ENCODE measurements at regions of chr4 and their contacts with region 1.

Region 1: DNA sequence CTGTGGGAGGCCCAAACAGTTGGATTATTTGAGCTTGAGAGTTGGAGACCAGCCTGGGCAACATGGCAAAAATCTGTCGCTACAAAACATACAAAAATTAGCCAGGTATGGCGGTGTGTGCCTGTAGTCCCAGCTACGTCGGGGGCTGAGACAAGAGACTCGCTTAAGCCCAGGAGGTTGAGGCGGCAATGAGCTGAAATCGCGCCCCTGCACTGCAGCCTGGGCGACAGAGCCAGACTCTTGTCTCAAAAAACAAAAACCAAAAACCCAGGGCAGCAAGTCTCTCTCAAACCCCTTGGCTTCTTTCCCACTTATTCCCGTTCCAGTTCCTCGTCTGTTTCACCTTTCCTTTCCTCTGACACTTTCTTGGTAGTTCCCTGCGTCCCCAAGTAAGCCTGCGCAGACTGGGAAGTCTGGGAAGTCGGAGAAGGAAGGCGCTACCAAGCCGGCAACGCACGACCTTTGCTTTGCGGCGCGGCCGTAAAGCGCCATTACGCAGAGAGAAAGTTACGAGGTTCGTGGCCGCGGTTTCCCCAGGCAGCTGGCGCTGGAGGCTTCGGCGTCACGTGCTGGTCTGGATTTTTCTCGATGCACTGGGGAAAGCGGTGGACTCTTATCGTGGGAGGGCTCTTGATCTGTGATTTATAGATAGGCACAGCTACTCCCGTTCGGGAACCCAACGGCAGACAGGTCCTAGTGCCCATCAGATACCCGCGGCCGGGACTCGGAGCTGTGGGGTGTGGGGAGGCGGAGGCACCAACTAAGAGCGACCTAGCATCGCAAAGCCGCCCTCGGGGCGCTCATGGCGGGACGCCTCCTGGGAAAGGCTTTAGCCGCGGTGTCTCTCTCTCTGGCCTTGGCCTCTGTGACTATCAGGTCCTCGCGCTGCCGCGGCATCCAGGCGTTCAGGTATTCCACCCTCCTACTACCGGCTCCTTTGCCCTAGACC is at the start of gene NUDT9:
- DNase-seq: peak; percentile 97
- H3K4me3 ChIP-seq: peak within 1 kb of the TSS; percentile 66 to 77 (median 67)
- H3K27ac ChIP-seq: peak within 1 kb of the TSS; percentile 80
- H3K4me1 ChIP-seq: peaks cover 13% of the 10 kb centered on the region
- H3K27me3 ChIP-seq: no peaks in the 10 kb centered on the region
- CTCF ChIP-seq: no peak
- total RNA-seq, gene NUDT9: 11.0 to 20.4 TPM

Region 2: GRCh38 chr4:86398187-86398586 is 1024.2 kb before region 1 on chr4:
- CTCF ChIA-PET with region 1: no interaction called
- dilution Hi-C with region 1: no loop called
- in situ Hi-C with region 1: no loop called
- intact Hi-C with region 1: no loop called
- DNase-seq: no peak
- H3K4me3 ChIP-seq: no peak overlapping the region
- H3K27ac ChIP-seq: no peak overlapping the region
- H3K4me1 ChIP-seq: no peaks in the 10 kb centered on the region
- H3K27me3 ChIP-seq: no peaks in the 10 kb centered on the region
- CTCF ChIP-seq: no peak

Region 3: DNA sequence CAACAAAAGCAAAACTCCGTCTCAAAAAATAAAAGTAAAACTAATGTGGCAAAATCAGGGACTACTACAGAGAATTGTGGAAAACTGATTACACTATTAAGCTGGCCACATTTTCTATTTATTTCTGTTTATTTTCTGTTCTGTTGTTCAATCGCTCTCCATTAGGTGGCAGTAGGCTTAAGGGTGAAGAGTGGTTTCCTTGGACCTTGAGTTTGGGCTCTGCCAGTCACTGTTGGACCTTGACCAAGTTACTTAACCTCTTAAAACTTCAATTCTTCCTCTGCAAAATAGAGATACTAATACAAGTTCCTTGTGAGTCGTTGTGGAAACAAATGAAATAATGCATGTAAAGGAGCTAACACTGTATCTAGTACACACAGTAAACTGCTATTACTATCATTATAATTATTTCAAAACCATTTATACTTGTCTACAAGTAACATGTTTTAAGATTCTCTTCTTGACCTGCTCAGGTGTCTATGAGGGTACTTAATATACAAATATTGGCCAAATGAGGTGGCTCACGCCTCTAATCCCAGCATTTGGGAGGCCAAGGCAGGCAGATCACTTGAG is 46.6 kb before region 1 on chr4:
- CTCF ChIA-PET with region 1: no interaction called
- dilution Hi-C with region 1: no loop called
- in situ Hi-C with region 1: no loop called
- intact Hi-C with region 1: loop called (anchors 1 kb)
- DNase-seq: peak; percentile 42
- H3K4me3 ChIP-seq: no peak overlapping the region
- H3K27ac ChIP-seq: no peak overlapping the region
- H3K4me1 ChIP-seq: no peaks in the 10 kb centered on the region
- H3K27me3 ChIP-seq: no peaks in the 10 kb centered on the region
- CTCF ChIP-seq: peak; percentile 75 to 80

Region 4: DNA sequence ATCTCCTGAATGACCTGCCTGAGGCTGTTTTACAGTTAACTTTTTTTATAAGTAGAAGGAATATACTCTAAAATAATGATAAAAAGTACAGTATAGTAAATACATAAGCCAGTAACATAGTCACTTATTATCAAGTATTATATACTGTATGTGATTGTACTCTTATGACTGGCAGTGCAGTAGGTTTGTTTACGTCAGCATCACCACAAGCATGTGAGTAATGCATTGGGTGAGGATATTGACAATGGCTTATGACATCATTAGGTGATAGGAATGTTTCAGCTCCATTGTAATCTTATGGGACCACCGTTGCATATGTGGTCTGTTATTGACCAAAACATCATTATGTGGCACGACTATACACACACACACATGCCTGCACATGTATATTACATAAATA is 20.5 kb after region 1 on chr4:
- CTCF ChIA-PET with region 1: no interaction called
- dilution Hi-C with region 1: no loop called
- in situ Hi-C with region 1: no loop called
- intact Hi-C with region 1: no loop called
- DNase-seq: no peak
- H3K4me3 ChIP-seq: no peak overlapping the region
- H3K27ac ChIP-seq: no peak overlapping the region
- H3K4me1 ChIP-seq: no peaks in the 10 kb centered on the region
- H3K27me3 ChIP-seq: no peaks in the 10 kb centered on the region
- CTCF ChIP-seq: no peak

Region 5: DNA sequence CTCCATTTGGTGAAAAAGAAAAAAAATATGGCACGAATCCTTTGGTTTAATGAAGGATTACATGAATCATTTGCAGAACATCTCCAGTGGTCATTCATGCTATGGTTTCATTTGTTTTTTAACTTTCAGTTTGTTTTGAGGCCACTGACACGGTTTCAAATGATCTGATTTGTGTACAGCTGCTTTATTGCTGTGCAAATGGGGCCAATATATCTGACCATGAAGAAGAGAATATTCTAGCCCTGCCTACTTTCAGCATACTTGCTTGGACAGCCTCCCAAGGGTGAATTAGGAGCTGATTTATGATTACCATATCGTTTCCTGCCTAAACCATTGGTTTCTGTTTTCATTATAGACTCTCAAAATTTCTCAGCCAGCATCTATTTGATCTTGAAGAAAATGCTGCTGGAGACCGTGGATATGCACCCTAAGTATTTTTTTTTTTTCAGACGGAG is 76.1 kb after region 1 on chr4:
- CTCF ChIA-PET with region 1: no interaction called
- dilution Hi-C with region 1: no loop called
- in situ Hi-C with region 1: no loop called
- intact Hi-C with region 1: no loop called
- DNase-seq: no peak
- H3K4me3 ChIP-seq: no peak overlapping the region
- H3K27ac ChIP-seq: no peak overlapping the region
- H3K4me1 ChIP-seq: no peaks in the 10 kb centered on the region
- H3K27me3 ChIP-seq: no peaks in the 10 kb centered on the region
- CTCF ChIP-seq: no peak

Region 6: GRCh38 chr4:87659247-87659931 is 237.0 kb after region 1 on chr4:
- CTCF ChIA-PET with region 1: interaction called, 11 read pairs
- dilution Hi-C with region 1: no loop called
- in situ Hi-C with region 1: no loop called
- intact Hi-C with region 1: no loop called
- DNase-seq: peak; percentile 61
- H3K4me3 ChIP-seq: no peak overlapping the region
- H3K27ac ChIP-seq: peak overlapping the region; percentile 55
- H3K4me1 ChIP-seq: peaks cover 27% of the 10 kb centered on the region
- H3K27me3 ChIP-seq: no peaks in the 10 kb centered on the region
- CTCF ChIP-seq: no peak

Region 7: GRCh38 chr4:88138566-88138965 is 716.2 kb after region 1 on chr4:
- CTCF ChIA-PET with region 1: no interaction called
- dilution Hi-C with region 1: no loop called
- in situ Hi-C with region 1: no loop called
- intact Hi-C with region 1: no loop called
- DNase-seq: peak; percentile 52
- H3K4me3 ChIP-seq: no peak overlapping the region
- H3K27ac ChIP-seq: no peak overlapping the region
- H3K4me1 ChIP-seq: peaks cover 12% of the 10 kb centered on the region
- H3K27me3 ChIP-seq: no peaks in the 10 kb centered on the region
- CTCF ChIP-seq: no peak

Measured in mammary epithelial cell (primary cell).